Left cardiac atrium (tissue), 4 donors: ENCODE measurements at regions of chr9 and their contacts with region 1.

Region 1: DNA sequence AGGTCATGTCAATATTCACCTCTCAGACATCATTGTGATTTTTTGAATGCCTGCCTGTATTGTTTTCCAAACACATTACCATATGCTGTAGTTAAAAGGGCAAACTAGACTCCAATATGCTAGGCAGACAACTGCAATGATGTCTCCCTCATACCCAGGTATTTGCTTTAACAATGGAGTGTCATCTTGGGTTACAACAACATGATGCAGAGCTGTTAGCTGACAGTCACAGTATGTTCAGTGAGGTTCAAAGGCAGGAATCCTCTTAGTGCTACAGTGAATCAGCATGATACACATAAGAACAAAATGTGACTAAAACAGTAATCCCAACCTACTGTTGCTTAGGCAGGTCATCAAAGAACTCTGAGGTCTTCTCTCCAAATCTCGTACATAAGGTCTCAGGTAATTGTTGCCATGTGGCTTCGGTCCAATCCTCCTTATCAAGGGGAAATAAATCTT is 24.0 kb downstream of the OR1J1 start:
- DNase-seq: no peak
- ATAC-seq: no peak

Region 2: GRCh38 chr9:122092611-122093506 is 360.8 kb before region 1 on chr9 and contains the start of gene TTLL11:
- intact Hi-C with region 1: loop called in 1 of 2 experiments (anchors 10 kb)
- DNase-seq: peak; percentile 98
- ATAC-seq: peak; percentile 97 to 98
- total RNA-seq, gene TTLL11: 4.5 to 6.5 TPM

Region 3: GRCh38 chr9:122389799-122390481 is 63.8 kb before region 1 on chr9:
- intact Hi-C with region 1: no loop called
- DNase-seq: no peak
- ATAC-seq: no peak